ENCODE measurements at regions of chr3 and their contacts with region 1.

Region 1: DNA sequence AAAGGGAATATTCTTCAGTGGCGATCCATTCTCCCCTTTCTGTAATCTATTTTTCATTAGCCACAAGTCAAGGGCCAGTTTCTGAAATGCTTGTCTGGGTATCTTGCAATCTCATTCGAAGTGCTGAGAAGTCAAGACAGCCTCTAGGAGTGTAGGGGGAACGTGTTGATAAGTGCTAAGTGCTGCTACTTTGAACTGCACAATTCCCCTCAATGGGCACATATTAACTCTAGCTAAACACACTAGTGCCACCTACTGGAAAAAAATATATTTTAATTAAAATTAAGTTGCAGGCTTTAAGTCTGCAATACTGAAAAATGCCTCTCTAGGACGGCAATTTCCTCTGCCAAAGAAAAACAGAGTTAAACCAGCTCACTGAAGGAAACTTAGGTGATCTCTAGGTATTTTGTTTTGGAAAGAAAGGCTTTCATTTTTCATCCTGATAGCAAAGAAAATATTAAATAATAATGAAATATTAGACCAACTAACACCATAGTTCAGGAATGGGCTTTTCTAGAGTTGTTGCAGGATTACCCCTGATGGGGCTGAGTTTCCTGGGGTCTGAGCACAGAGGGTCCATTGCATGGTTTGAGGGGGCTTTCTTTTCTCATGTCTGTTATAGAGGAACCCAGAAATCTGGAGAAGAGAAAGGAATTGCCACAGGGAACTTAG is 181.9 kb upstream of the KBTBD8 start:
- DNase-seq: peak; percentile 57
- H3K4me3 Mint-ChIP-seq: no peak overlapping the region
- H3K27ac Mint-ChIP-seq: no peak overlapping the region
- H3K4me1 Mint-ChIP-seq: peaks cover 7% of the 10 kb centered on the region
- H3K27me3 Mint-ChIP-seq: peaks cover 11% of the 10 kb centered on the region
- CTCF ChIP-seq: peak; percentile 51

Region 2: GRCh38 chr3:65936908-65937638 is 879.2 kb before region 1 on chr3:
- CTCF ChIA-PET with region 1: no interaction called
- POLR2A ChIA-PET with region 1: no interaction called
- intact Hi-C with region 1: no loop called
- DNase-seq: no peak
- H3K4me3 Mint-ChIP-seq: no peak overlapping the region
- H3K27ac Mint-ChIP-seq: no peak overlapping the region
- H3K4me1 Mint-ChIP-seq: no peaks in the 10 kb centered on the region
- H3K27me3 Mint-ChIP-seq: no peaks in the 10 kb centered on the region
- CTCF ChIP-seq: no peak

Region 3: GRCh38 chr3:66276705-66277274 is 539.4 kb before region 1 on chr3:
- CTCF ChIA-PET with region 1: interaction called, 39 read pairs
- POLR2A ChIA-PET with region 1: no interaction called
- intact Hi-C with region 1: no loop called
- DNase-seq: peak; percentile 68
- H3K4me3 Mint-ChIP-seq: no peak overlapping the region
- H3K27ac Mint-ChIP-seq: no peak overlapping the region
- H3K4me1 Mint-ChIP-seq: no peaks in the 10 kb centered on the region
- H3K27me3 Mint-ChIP-seq: no peaks in the 10 kb centered on the region
- CTCF ChIP-seq: peak; percentile 56

Region 4: DNA sequence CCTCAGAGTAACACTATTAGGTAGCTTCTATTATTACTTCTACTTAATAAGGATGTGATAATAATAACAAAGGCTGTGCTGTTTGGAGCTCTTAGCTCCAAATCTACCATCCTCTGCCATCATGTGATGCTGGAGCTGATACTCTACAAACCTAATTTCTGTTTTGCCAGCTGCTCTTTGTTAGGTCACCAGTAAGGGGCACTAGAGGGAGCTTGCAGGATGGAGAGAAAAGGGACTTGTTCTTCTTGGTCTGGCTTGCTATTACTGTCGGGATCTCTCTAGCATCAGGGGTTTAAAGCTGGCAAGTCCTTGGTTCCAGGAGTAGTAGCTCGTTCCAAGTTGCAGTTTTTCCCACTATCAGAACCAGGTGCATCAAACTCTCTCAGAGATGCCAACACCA is 13.0 kb before region 1 on chr3:
- CTCF ChIA-PET with region 1: interaction called, 26 read pairs
- POLR2A ChIA-PET with region 1: interaction called, 5 read pairs
- intact Hi-C with region 1: no loop called
- DNase-seq: no peak
- H3K4me3 Mint-ChIP-seq: no peak overlapping the region
- H3K27ac Mint-ChIP-seq: no peak overlapping the region
- H3K4me1 Mint-ChIP-seq: no peaks in the 10 kb centered on the region
- H3K27me3 Mint-ChIP-seq: no peaks in the 10 kb centered on the region
- CTCF ChIP-seq: no peak

Region 5: GRCh38 chr3:66828303-66828702 is 12.1 kb after region 1 on chr3:
- CTCF ChIA-PET with region 1: interaction called, 16 read pairs
- POLR2A ChIA-PET with region 1: no interaction called
- intact Hi-C with region 1: no loop called
- DNase-seq: no peak
- H3K4me3 Mint-ChIP-seq: no peak overlapping the region
- H3K27ac Mint-ChIP-seq: no peak overlapping the region
- H3K4me1 Mint-ChIP-seq: no peaks in the 10 kb centered on the region
- H3K27me3 Mint-ChIP-seq: no peaks in the 10 kb centered on the region
- CTCF ChIP-seq: no peak

Region 6: DNA sequence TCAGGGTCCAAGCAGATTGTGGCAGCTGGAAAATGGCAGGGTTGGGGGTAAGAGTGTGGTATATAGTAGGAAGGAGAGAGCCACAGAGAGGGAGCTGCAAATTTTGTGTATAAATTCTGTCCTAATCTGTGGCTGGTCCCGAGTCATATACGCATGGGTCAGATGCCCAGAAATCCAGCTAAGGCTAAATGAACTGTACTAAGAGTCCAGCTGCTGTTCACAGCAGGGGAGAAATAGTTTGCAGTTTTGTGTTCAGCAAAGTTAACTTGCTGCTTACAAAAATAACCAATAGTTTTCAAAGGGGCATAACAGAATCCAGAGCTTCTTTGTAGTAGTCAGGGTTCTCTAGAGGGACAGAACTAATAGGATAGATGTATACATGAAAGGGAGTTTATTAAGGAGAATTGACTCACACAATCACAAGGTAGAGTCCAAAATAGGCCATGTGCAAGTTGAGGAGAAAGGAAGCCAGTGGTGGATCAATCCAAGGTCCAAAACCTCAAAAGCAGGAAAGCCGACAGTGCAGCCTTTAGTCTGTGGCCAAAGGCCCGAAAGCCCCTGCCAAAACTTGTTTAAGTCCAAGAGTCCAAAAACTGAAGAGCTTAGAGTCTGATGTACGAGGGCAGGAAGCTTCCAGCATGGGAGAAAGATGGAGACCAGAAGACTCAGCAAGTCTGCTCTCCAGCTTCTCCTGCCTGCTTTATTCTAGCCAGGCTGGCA is 35.8 kb after region 1 on chr3:
- CTCF ChIA-PET with region 1: no interaction called
- POLR2A ChIA-PET with region 1: no interaction called
- intact Hi-C with region 1: no loop called
- DNase-seq: no peak
- H3K4me3 Mint-ChIP-seq: no peak overlapping the region
- H3K27ac Mint-ChIP-seq: no peak overlapping the region
- H3K4me1 Mint-ChIP-seq: no peaks in the 10 kb centered on the region
- H3K27me3 Mint-ChIP-seq: no peaks in the 10 kb centered on the region
- CTCF ChIP-seq: no peak